ENCODE measurements at regions of chr14 and their contacts with region 1.

Region 1: GRCh38 chr14:105861985-105862465 is 335.6 kb downstream of the TMEM121 start:
- DNase-seq: peak; percentile 57
- ATAC-seq: peak; percentile 30
- H3K4me3 Mint-ChIP-seq: peak overlapping the region; percentile 98
- H3K27ac Mint-ChIP-seq: peak overlapping the region; percentile 99
- H3K4me1 Mint-ChIP-seq: peaks cover 1% of the 10 kb centered on the region
- H3K27me3 Mint-ChIP-seq: no peaks in the 10 kb centered on the region
- CTCF ChIP-seq: no peak

Region 2: GRCh38 chr14:105481883-105482457 is 380.1 kb before region 1 on chr14:
- CTCF ChIA-PET with region 1: no interaction called
- POLR2A ChIA-PET with region 1: no interaction called
- intact Hi-C with region 1: no loop called
- DNase-seq: peak; percentile 77
- ATAC-seq: peak; percentile 55
- H3K4me3 Mint-ChIP-seq: peak overlapping the region; percentile 66
- H3K27ac Mint-ChIP-seq: peak overlapping the region; percentile 94
- H3K4me1 Mint-ChIP-seq: peaks cover 73% of the 10 kb centered on the region
- H3K27me3 Mint-ChIP-seq: peaks cover 3% of the 10 kb centered on the region
- CTCF ChIP-seq: no peak

Region 3: DNA sequence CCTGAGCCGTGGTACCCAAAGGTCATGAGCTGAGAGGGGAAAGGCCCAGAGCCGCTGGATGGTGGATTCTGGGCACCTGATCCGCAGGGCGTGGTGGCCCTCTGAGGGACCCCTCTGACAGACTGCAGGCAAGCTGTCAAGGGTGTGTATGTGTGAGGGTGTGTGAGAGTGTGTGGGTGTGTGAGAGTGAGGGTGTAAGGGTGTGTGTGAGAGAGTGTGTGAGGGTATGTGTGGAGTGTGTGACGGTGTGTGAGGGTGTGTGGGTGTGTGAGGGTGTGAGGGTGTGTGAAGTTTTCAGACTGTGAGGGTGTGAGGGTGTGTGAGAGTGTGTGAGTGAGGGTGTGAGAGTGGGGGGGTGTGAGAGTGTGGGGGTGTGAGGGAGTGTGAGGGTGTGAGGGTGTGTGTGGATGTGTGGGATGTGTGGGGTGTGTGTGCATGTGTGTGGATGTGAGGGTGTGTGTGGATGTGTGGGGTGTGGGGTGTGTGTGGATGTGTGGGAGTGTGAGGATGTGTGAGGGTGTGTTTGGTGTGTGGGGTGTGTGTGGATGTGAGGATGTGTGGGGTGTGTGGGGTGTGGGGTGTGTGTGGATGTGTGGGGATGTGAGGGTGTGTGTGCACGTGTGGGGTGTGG is 179.0 kb before region 1 on chr14:
- CTCF ChIA-PET with region 1: no interaction called
- POLR2A ChIA-PET with region 1: interaction called, 9 read pairs
- intact Hi-C with region 1: loop called (anchors 2 kb)
- DNase-seq: peak; percentile 24
- ATAC-seq: no peak
- H3K4me3 Mint-ChIP-seq: peak overlapping the region; percentile 76
- H3K27ac Mint-ChIP-seq: peak overlapping the region; percentile 95
- H3K4me1 Mint-ChIP-seq: peaks cover 44% of the 10 kb centered on the region
- H3K27me3 Mint-ChIP-seq: no peaks in the 10 kb centered on the region
- CTCF ChIP-seq: no peak

Region 4: DNA sequence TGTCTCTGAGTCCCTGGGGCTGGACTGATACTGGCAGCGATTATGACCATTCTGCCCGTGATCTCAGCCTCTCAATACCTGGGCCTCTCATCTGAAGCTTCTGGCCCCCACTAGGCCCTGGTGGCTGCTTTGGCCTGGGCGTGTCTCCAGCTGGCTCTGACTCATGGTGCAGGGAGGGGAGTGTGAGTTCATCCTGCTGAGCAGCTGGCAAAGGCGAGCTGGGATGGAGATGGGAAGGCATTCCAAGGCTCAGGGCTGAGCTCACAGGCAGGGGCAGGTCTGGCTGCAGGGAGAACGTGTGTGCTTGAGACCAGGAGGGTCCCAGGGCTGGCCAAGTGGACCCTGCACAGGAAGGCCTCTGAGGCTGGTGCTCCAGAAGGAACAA is 113.8 kb before region 1 on chr14:
- CTCF ChIA-PET with region 1: interaction called, 4 read pairs
- POLR2A ChIA-PET with region 1: interaction called, 117 read pairs
- intact Hi-C with region 1: loop called (anchors 2 kb)
- DNase-seq: no peak
- ATAC-seq: peak; percentile 70
- H3K4me3 Mint-ChIP-seq: peak overlapping the region; percentile 95
- H3K27ac Mint-ChIP-seq: peak overlapping the region; percentile 93
- H3K4me1 Mint-ChIP-seq: peaks cover 38% of the 10 kb centered on the region
- H3K27me3 Mint-ChIP-seq: no peaks in the 10 kb centered on the region
- CTCF ChIP-seq: no peak

Region 5: DNA sequence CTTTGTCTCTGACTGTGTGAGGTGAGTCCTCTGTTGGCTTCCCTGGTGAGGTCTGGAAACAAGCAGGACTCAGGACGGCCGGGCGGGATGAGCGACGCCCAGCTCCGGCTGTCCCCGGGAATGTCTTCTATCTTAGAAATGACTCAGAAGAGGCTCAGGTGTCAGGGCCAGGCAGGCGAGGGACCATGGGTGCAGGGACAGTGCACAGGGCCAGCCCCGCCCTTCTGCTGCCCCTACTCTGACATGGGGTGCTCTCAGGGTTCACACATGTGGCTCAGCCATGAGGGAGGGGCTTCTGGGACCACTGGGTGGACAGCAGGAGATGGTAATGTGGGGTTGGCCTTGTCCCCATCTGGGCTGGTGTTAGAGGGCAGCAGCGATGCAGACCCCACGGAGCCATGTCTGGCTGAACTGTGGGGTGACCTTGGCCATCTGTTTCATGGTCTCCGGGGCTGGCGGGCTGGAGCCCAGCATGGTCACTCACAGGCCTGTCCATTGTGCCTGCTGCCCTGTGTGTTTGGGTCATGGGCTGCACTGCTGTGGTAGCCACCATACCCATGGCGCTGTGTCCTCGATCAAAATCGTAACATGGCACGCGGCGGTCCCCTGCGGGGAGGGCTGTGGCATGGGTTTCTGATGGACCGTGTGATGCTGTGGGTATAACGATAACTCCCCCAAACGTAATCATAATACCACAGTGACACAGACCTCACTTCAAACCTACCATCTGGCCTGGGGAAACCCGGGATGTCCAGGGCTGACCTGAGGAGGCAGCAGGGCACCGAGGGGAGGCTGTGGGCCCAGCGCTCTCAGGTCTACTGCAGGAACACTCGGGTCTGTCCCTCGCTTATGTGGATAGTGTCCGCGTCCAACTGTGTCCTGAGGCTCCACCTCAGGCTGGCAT is 33.2 kb after region 1 on chr14:
- CTCF ChIA-PET with region 1: no interaction called
- POLR2A ChIA-PET with region 1: interaction called, 93 read pairs
- intact Hi-C with region 1: no loop called
- DNase-seq: peak; percentile 1
- ATAC-seq: no peak
- H3K4me3 Mint-ChIP-seq: peak overlapping the region; percentile 50
- H3K27ac Mint-ChIP-seq: peak overlapping the region; percentile 30
- H3K4me1 Mint-ChIP-seq: peaks cover 22% of the 10 kb centered on the region
- H3K27me3 Mint-ChIP-seq: no peaks in the 10 kb centered on the region
- CTCF ChIP-seq: no peak

Region 6: DNA sequence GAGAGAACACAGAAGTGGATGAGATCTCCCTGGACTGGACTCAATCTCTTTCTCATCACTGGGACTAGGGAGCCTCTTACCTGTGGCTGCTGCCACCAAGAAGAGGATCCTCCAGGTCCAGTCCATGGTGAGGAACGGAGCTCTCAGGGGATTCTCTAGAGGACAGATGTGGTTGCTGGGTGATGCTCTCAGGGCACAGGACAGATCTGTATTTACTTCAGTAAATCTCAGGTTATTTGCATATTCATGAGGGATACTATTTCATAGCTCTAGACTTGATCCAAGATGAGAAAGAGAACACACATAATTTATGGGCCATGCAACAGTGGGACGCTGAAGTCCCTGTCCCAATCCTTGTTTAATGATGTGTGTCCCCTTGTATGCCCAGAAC is 124.9 kb after region 1 on chr14:
- CTCF ChIA-PET with region 1: no interaction called
- POLR2A ChIA-PET with region 1: interaction called, 16 read pairs
- intact Hi-C with region 1: no loop called
- DNase-seq: no peak
- ATAC-seq: peak; percentile 58
- H3K4me3 Mint-ChIP-seq: peak overlapping the region; percentile 38
- H3K27ac Mint-ChIP-seq: peak overlapping the region; percentile 46
- H3K4me1 Mint-ChIP-seq: peaks cover 32% of the 10 kb centered on the region
- H3K27me3 Mint-ChIP-seq: no peaks in the 10 kb centered on the region
- CTCF ChIP-seq: no peak

Region 7: DNA sequence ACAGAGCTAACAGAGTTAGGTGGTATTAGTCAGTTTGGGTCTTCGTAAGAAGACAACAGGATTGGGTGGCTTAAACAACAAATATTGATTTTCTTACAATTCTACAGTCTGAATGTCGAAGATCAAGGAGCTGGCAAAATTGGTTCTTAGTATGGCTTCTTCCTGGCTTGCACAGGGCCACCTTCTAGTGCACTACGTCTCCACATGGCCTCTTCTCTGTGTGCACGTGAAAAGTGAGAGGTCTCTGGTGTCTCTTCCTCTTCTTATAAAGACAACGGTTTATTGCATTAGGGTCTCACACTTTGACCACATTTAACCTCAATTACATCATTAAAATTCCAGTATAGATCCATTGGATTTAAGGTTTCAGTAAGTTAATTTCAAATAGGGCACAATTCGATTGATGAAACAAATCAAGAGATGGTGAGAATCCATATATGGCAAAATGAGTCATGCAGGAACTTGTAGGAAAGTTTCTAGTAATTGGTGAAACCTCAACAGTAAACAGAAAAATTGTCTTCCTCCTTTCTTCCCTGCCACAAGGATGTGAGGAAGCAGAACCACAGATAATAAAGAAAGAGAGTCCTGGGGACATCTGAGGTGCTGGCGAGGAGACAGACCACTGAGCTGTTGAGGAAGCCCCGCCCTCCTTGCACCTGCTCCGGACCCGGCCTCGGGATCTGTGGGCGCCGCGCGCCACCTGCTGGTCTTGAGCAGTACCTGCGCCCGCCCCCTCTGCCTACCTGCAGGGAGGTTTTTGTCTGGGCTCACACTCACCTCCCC is 511.0 kb after region 1 on chr14:
- CTCF ChIA-PET with region 1: no interaction called
- POLR2A ChIA-PET with region 1: interaction called, 17 read pairs
- intact Hi-C with region 1: loop called (anchors 10 kb)
- DNase-seq: peak; percentile 67
- ATAC-seq: peak; percentile 98
- H3K4me3 Mint-ChIP-seq: peak overlapping the region; percentile 64
- H3K27ac Mint-ChIP-seq: no peak overlapping the region
- H3K4me1 Mint-ChIP-seq: peaks cover 24% of the 10 kb centered on the region
- H3K27me3 Mint-ChIP-seq: peaks cover 2% of the 10 kb centered on the region
- CTCF ChIP-seq: no peak